Activated B cell treated with CpG ODN at 0.5 μM for 24 hours (primary cell): ENCODE measurements at regions of chr6 and their contacts with region 1.

Region 1: GRCh38 chr6:27838058-27838944 is 73.9 kb downstream of the OR2B2 start:
- DNase-seq: peak; percentile 73
- ATAC-seq: peak; percentile 76
- H3K4me3 Mint-ChIP-seq: no peak overlapping the region
- H3K27ac Mint-ChIP-seq: no peak overlapping the region
- H3K4me1 Mint-ChIP-seq: peaks cover 18% of the 10 kb centered on the region
- H3K27me3 Mint-ChIP-seq: no peaks in the 10 kb centered on the region
- CTCF ChIP-seq: no peak

Region 2: GRCh38 chr6:26025894-26026832 is 1812.1 kb before region 1 on chr6:
- CTCF ChIA-PET with region 1: no interaction called
- POLR2A ChIA-PET with region 1: interaction called, 39 read pairs
- intact Hi-C with region 1: loop called (anchors 10 kb)
- DNase-seq: peak; percentile 76
- ATAC-seq: peak; percentile 39
- H3K4me3 Mint-ChIP-seq: peak overlapping the region; percentile 96
- H3K27ac Mint-ChIP-seq: peak overlapping the region; percentile 99
- H3K4me1 Mint-ChIP-seq: peaks cover 35% of the 10 kb centered on the region
- H3K27me3 Mint-ChIP-seq: peaks cover 2% of the 10 kb centered on the region
- CTCF ChIP-seq: no peak

Region 3: GRCh38 chr6:26234421-26235296 is 1603.6 kb before region 1 on chr6:
- CTCF ChIA-PET with region 1: no interaction called
- POLR2A ChIA-PET with region 1: interaction called, 20 read pairs
- intact Hi-C with region 1: no loop called
- DNase-seq: peak; percentile 49
- ATAC-seq: peak; percentile 77
- H3K4me3 Mint-ChIP-seq: peak overlapping the region; percentile 89
- H3K27ac Mint-ChIP-seq: peak overlapping the region; percentile 97
- H3K4me1 Mint-ChIP-seq: peaks cover 26% of the 10 kb centered on the region
- H3K27me3 Mint-ChIP-seq: no peaks in the 10 kb centered on the region
- CTCF ChIP-seq: no peak

Region 4: GRCh38 chr6:27138837-27139755 is 699.2 kb before region 1 on chr6:
- CTCF ChIA-PET with region 1: no interaction called
- POLR2A ChIA-PET with region 1: interaction called, 72 read pairs
- intact Hi-C with region 1: loop called (anchors 2 kb)
- DNase-seq: peak; percentile 59
- ATAC-seq: peak; percentile 82
- H3K4me3 Mint-ChIP-seq: peak overlapping the region; percentile 97
- H3K27ac Mint-ChIP-seq: peak overlapping the region; percentile 98
- H3K4me1 Mint-ChIP-seq: peaks cover 62% of the 10 kb centered on the region
- H3K27me3 Mint-ChIP-seq: no peaks in the 10 kb centered on the region
- CTCF ChIP-seq: no peak

Region 5: DNA sequence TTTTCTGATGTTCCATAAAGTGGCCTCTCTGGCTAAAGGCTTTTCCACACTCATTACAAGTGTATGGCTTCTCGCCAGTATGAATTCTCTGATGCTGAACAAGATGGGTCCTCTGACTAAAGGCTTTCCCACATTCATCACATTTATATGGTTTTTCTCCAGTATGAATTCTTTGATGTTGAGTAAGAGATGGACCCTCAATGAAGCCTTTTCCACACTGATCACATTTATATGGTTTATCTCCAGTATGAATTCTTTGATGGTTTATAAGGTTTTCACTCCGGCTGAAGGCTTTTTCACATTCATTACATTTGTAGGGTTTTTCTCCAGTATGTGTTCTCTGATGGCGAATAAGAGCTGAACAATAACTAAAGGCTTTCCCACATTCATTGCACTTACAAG is 385.8 kb before region 1 on chr6:
- CTCF ChIA-PET with region 1: no interaction called
- POLR2A ChIA-PET with region 1: no interaction called
- intact Hi-C with region 1: no loop called
- DNase-seq: no peak
- ATAC-seq: no peak
- H3K4me3 Mint-ChIP-seq: no peak overlapping the region
- H3K27ac Mint-ChIP-seq: no peak overlapping the region
- H3K4me1 Mint-ChIP-seq: no peaks in the 10 kb centered on the region
- H3K27me3 Mint-ChIP-seq: no peaks in the 10 kb centered on the region
- CTCF ChIP-seq: no peak

Region 6: DNA sequence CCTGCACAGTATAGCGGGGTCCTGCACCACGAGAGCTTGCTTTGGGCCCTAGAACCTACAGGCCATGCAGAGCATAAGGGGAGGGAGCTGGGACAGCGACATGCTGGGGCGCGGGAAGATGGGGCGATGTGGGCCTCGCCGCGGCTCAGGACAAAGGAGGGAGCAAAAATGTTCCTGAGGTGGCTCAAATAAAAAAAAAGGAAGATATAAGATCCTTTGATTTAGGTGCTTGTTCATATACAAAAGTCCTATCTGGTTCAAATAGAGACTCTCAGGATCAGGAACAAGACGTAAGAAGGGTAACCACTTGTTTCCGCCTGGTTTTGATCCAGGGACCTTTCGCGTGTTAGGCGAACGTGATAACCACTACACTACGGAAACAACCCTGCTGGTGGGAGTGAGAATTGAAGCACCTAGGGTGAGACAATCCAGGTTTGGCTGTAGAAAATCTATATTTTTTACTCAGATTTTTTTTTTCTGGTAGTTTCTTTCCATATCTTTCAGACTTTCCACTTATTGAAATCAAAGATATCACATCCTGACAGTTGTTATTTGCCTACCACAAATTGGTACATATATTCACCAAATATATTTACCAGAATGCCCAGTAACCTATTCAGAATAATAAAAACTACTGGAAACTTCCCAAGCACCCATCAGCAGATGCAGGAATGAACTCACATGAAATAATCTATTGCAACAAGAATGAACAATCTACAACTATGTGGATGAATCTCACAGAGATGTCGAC is 187.5 kb before region 1 on chr6:
- CTCF ChIA-PET with region 1: no interaction called
- POLR2A ChIA-PET with region 1: no interaction called
- intact Hi-C with region 1: no loop called
- DNase-seq: no peak
- ATAC-seq: no peak
- H3K4me3 Mint-ChIP-seq: no peak overlapping the region
- H3K27ac Mint-ChIP-seq: no peak overlapping the region
- H3K4me1 Mint-ChIP-seq: no peaks in the 10 kb centered on the region
- H3K27me3 Mint-ChIP-seq: peaks cover 39% of the 10 kb centered on the region
- CTCF ChIP-seq: no peak

Region 7: DNA sequence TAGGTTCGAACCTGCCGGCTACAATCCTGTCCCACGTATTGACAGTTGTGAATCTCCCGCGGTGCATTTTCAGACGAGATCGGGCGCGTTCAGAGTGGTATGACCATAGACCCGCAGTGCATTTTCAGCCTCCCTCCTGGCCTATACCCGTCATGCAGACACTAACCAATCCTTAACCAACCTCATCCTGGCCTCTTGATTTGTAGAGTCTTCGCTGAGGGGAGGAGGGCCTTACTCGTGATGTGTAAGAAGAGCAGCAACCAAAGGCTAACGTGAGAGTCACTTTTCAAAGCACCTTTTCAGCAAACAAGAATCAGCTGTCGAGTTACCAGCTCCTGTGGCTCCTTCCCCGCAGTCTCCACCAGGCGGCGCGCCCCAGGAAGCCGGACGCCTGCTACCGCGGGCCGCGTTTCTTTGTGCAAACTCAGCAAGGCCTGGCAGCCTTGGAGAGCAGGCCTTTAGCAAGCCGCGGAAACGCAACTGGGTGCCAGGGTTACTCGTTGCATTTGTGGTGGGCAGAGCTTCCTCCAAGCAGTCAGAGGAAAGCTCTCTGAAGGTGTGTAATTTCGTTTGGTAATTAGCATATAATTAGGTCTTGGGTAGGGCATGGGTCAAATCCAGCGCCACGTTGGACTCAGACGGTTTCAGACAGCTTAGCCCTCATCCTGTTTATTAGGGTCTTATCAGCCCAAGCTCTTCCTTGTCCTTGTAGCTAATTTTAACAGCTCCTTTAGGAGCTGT is 65.9 kb before region 1 on chr6:
- CTCF ChIA-PET with region 1: no interaction called
- POLR2A ChIA-PET with region 1: interaction called, 12 read pairs
- intact Hi-C with region 1: no loop called
- DNase-seq: peak; percentile 74
- ATAC-seq: peak; percentile 92
- H3K4me3 Mint-ChIP-seq: peak overlapping the region; percentile 57
- H3K27ac Mint-ChIP-seq: peak overlapping the region; percentile 66
- H3K4me1 Mint-ChIP-seq: peaks cover 38% of the 10 kb centered on the region
- H3K27me3 Mint-ChIP-seq: peaks cover 5% of the 10 kb centered on the region
- CTCF ChIP-seq: peak; percentile 66

Region 8: GRCh38 chr6:27864906-27865849 is 26.9 kb after region 1 on chr6:
- CTCF ChIA-PET with region 1: interaction called, 18 read pairs
- POLR2A ChIA-PET with region 1: interaction called, 1,167 read pairs
- intact Hi-C with region 1: loop called (anchors 1 kb)
- DNase-seq: peak; percentile 68
- ATAC-seq: peak; percentile 85
- H3K4me3 Mint-ChIP-seq: peak overlapping the region; percentile 98
- H3K27ac Mint-ChIP-seq: peak overlapping the region; percentile 99
- H3K4me1 Mint-ChIP-seq: peaks cover 48% of the 10 kb centered on the region
- H3K27me3 Mint-ChIP-seq: no peaks in the 10 kb centered on the region
- CTCF ChIP-seq: no peak

Region 9: GRCh38 chr6:28895134-28895812 is 1057.0 kb after region 1 on chr6:
- CTCF ChIA-PET with region 1: no interaction called
- POLR2A ChIA-PET with region 1: interaction called, 14 read pairs
- intact Hi-C with region 1: no loop called
- DNase-seq: peak; percentile 66
- ATAC-seq: peak; percentile 66
- H3K4me3 Mint-ChIP-seq: peak overlapping the region; percentile 97
- H3K27ac Mint-ChIP-seq: peak overlapping the region; percentile 99
- H3K4me1 Mint-ChIP-seq: peaks cover 23% of the 10 kb centered on the region
- H3K27me3 Mint-ChIP-seq: peaks cover 3% of the 10 kb centered on the region
- CTCF ChIP-seq: no peak